A673 (cell line): ENCODE measurements at regions of chr19 and their contacts with region 1.

Region 1: GRCh38 chr19:44113138-44113783 is at the start of gene ZNF225:
- DNase-seq: peak; percentile 99
- H3K4me3 ChIP-seq: peak within 1 kb of the TSS; percentile 61
- H3K27ac ChIP-seq: peak within 1 kb of the TSS; percentile 67
- H3K4me1 ChIP-seq: no peaks in the 10 kb centered on the region
- H3K27me3 ChIP-seq: no peaks in the 10 kb centered on the region
- CTCF ChIP-seq: no peak
- total RNA-seq, gene ZNF225: 6.3 and 7.1 TPM in 2 replicates

Region 2: GRCh38 chr19:43711751-43712355 is 401.4 kb before region 1 on chr19:
- CTCF ChIA-PET with region 1: no interaction called
- POLR2A ChIA-PET with region 1: no interaction called
- intact Hi-C with region 1: no loop called
- DNase-seq: no peak
- H3K4me3 ChIP-seq: no peak overlapping the region
- H3K27ac ChIP-seq: no peak overlapping the region
- H3K4me1 ChIP-seq: no peaks in the 10 kb centered on the region
- H3K27me3 ChIP-seq: no peaks in the 10 kb centered on the region
- CTCF ChIP-seq: no peak

Region 3: GRCh38 chr19:43913383-43913782 is 199.9 kb before region 1 on chr19:
- CTCF ChIA-PET with region 1: no interaction called
- POLR2A ChIA-PET with region 1: no interaction called
- intact Hi-C with region 1: no loop called
- DNase-seq: no peak
- H3K4me3 ChIP-seq: no peak overlapping the region
- H3K27ac ChIP-seq: no peak overlapping the region
- H3K4me1 ChIP-seq: no peaks in the 10 kb centered on the region
- H3K27me3 ChIP-seq: no peaks in the 10 kb centered on the region
- CTCF ChIP-seq: no peak

Region 4: DNA sequence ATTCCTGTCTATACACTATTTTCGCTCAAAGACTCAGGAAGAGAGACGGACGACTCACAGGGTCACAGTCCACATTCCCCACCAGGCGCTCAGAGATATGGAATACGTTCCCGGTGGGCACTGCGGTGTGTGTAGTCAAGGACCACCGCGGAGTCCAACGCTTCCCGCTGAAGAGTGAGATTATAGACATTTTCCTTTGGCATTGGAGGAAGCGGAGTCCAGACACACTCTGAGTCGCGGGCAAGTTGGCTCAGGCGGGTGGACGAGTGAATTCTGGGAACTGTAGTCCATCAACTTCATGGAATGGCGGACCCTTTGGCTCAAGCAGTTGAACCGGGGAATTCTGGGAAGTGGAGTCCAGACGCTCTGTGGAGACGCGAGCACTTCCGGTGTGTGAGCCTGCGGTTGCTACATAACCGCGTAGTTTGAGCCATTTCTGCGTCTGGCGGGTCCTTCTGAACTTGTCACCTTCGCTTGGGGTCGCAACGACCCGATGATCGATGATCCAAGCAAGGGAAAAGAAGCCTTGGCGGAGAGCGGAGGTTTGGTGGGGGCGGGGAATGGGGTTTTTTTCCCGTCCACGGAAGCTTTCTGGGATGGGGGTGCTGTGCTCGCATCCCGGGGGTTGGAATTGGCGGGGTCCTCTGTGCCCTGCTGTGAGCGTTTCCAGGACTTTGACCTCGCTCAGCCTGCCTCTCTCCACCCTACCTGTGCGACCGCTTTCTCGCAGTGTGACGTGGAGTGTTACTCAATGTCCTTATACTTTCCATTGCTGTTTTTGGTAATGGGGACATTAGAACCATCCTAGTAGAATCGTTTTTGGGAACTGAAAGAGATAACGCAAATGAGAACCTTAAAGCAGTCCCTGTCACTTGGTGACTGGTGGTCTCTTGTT is 110.4 kb before region 1 on chr19 and contains the start of gene ZNF230:
- CTCF ChIA-PET with region 1: no interaction called
- POLR2A ChIA-PET with region 1: no interaction called
- intact Hi-C with region 1: loop called (anchors 5 kb)
- DNase-seq: peak; percentile 98
- H3K4me3 ChIP-seq: peak within 1 kb of the TSS; percentile 67
- H3K27ac ChIP-seq: peak within 1 kb of the TSS; percentile 47
- H3K4me1 ChIP-seq: peaks cover 3% of the 10 kb centered on the region
- H3K27me3 ChIP-seq: no peaks in the 10 kb centered on the region
- CTCF ChIP-seq: no peak
- total RNA-seq, gene ZNF230: 5.2 and 5.4 TPM in 2 replicates

Region 5: GRCh38 chr19:44093931-44094765 is 19.1 kb before region 1 on chr19 and contains the start of gene ZNF224:
- CTCF ChIA-PET with region 1: no interaction called
- POLR2A ChIA-PET with region 1: no interaction called
- intact Hi-C with region 1: loop called (anchors 1 kb)
- DNase-seq: peak; percentile 96
- H3K4me3 ChIP-seq: peak within 1 kb of the TSS; percentile 78
- H3K27ac ChIP-seq: peak within 1 kb of the TSS; percentile 73
- H3K4me1 ChIP-seq: no peaks in the 10 kb centered on the region
- H3K27me3 ChIP-seq: no peaks in the 10 kb centered on the region
- CTCF ChIP-seq: no peak
- total RNA-seq, gene ZNF224: 20.4 and 23.8 TPM in 2 replicates